ENCODE measurements at regions of chr5 and their contacts with region 1.

Region 1: DNA sequence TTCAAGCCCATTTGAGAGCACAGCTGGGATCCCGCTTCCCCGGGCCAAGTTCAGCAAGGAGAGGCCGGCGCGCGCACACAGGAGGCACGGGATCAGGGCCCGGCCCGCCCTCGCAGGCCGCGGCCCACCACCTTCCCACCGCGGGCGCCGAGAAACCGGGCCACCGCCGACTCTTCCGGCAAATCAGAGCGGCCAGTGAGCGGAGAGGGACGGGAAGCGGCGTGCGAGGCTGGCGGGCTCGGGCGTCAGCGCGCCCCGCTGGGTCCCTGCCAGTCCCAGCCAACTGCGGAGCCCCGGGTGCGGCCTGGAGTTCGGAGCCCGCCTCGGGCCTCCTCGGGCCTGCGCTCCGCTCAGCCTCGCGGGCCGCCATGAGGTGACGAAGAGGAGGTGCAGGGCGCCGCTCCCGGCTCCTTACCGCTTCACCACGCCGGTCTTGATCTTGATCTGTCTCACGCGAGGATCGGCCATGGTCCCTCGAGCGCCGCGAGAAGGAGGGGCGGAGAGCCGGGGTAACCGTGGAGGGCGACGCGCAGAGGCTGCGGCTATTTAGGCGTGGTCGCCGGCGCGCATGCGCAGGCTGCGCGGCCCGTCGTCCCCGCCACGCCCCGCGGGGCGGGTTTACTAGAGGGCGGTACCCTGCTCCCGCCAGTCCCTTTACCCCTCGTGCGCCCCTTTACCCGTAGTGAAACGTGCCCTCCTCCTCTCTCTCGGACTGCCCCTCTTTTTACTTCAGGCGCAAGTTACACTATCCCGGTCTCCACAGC is at the start of gene TBCA:
- DNase-seq: peak; percentile 88 to 94 (median 92)
- ATAC-seq: peak; percentile 95 to 99 (median 98)
- H3K4me3 ChIP-seq: peak within 1 kb of the TSS; percentile 63 to 96 (median 82)
- H3K27ac ChIP-seq: peak within 1 kb of the TSS; percentile 87 to 98 (median 93)
- H3K4me1 ChIP-seq: peaks cover 0 to 51% (median 39%) of the 10 kb centered on the region in 12 donors
- H3K27me3 ChIP-seq: no peaks in the 10 kb centered on the region
- CTCF ChIP-seq: peak in 6 of 12 donors; percentile 10 to 48 (median 34)
- POLR2A ChIP-seq: peak in 1 of 2 donors; percentile 81
- total RNA-seq, gene TBCA: 108 to 161 (median 132) TPM

Region 2: GRCh38 chr5:77645158-77645994 is 130.6 kb before region 1 on chr5:
- intact Hi-C with region 1: loop called in 3 of 10 experiments (anchors 5 to 10 kb)
- DNase-seq: peak in 2 of 5 donors; percentile 28 to 69
- ATAC-seq: peak; percentile 32 to 84 (median 68)
- H3K4me3 ChIP-seq: peak overlapping the region in 6 of 12 donors; percentile 15 to 41 (median 31)
- H3K27ac ChIP-seq: no peak overlapping the region
- H3K4me1 ChIP-seq: peaks cover 0 to 38% (median 9%) of the 10 kb centered on the region in 12 donors
- H3K27me3 ChIP-seq: peaks cover 45 to 95% (median 71%) of the 10 kb centered on the region in 9 donors
- CTCF ChIP-seq: peak; percentile 20 to 84 (median 48)
- POLR2A ChIP-seq: no peak

Region 3: DNA sequence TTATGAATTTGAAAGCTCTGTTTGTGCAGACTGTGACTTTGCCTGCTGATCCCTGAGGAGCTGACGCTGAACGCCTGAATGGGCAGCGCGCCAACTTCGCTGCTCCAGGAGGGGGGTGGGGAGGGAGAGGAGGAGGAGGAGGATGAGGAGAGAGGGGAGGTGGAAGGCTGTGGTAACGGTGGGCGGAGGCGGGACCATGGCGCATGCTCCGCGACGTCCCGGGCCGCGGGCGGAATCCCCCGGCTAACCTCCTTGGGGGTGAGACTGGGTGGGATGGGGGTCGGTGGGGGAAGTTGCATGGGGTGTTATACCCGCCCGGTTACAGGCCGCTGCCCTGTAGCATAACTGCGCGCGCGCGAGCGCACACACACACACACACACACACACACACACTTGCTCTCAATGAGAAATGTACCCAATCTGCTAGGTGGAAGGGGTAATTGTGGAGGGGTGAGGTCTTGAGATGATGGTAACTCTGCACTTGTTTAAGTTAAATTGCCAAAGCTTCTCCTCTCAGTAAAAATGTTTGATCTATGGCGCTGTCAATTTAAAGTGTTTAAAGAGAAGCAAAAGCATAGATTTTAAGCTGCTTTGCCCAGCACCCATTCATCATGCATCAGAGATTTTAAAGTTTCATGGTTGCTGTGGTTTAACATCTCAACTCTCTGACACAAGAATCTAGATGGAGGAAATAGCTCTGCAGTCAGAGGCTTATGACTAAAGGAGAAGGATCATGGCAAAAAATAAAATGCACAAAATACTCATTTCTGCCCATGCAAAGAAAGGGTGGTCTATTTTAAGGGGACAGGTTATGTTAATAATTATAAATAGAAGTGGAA is 76.8 kb after region 1 on chr5:
- intact Hi-C with region 1: loop called in 1 of 10 experiments (anchors 2 kb)
- DNase-seq: peak; percentile 57 to 84 (median 72)
- ATAC-seq: peak; percentile 52 to 91 (median 86)
- H3K4me3 ChIP-seq: peak overlapping the region; percentile 28 to 74 (median 61)
- H3K27ac ChIP-seq: peak overlapping the region in 3 of 12 donors; percentile 3 to 32 (median 20)
- H3K4me1 ChIP-seq: peaks cover 0 to 19% (median 4%) of the 10 kb centered on the region in 12 donors
- H3K27me3 ChIP-seq: peaks cover 0 to 38% (median 0%) of the 10 kb centered on the region in 9 donors
- CTCF ChIP-seq: no peak
- POLR2A ChIP-seq: no peak

Region 4: GRCh38 chr5:78235289-78235688 is 459.3 kb after region 1 on chr5:
- intact Hi-C with region 1: no loop called
- DNase-seq: no peak
- ATAC-seq: no peak
- H3K4me3 ChIP-seq: no peak overlapping the region
- H3K27ac ChIP-seq: no peak overlapping the region
- H3K4me1 ChIP-seq: peaks cover 0 to 11% (median 0%) of the 10 kb centered on the region in 12 donors
- H3K27me3 ChIP-seq: no peaks in the 10 kb centered on the region
- CTCF ChIP-seq: no peak
- POLR2A ChIP-seq: no peak